ENCODE measurements at regions of chr2 and their contacts with region 1.

Region 1: DNA sequence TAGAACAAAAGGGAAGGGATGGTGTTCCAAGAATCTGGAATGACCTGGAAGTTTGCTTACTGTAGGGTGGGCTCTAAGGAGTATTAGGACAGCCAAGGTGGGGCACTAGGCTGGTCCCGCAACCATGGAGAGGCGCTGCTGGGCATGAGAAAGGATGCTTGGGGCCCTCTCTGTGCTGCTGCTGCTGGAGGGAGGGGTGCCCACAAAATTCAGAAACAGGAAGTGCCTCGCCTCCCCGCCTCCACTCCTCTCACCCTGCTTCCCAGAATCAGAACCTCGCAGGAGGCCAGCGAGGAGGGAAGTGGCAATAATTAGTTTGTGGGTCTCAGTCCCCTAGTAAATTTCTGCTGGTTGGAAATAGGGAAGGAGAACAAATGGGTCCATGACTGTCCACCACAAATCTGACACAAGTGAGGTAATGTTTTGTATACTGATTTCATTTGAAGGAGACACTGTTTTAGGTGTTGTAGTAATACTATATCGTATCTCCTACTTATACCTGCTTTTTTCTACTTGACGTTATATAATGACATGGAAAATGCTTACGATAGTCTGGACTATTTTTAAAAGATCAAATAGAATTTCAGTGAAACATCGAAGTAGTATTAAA is 7.9 kb upstream of the PDCL3 start:
- DNase-seq: peak; percentile 34
- H3K4me3 Mint-ChIP-seq: peak overlapping the region; percentile 68
- H3K27ac Mint-ChIP-seq: peak overlapping the region; percentile 82
- H3K4me1 Mint-ChIP-seq: peaks cover 20% of the 10 kb centered on the region
- H3K27me3 Mint-ChIP-seq: peaks cover 2% of the 10 kb centered on the region

Region 2: GRCh38 chr2:100529900-100530299 is 25.0 kb before region 1 on chr2:
- intact Hi-C with region 1: no loop called
- DNase-seq: no peak
- H3K4me3 Mint-ChIP-seq: no peak overlapping the region
- H3K27ac Mint-ChIP-seq: no peak overlapping the region
- H3K4me1 Mint-ChIP-seq: peaks cover 6% of the 10 kb centered on the region
- H3K27me3 Mint-ChIP-seq: no peaks in the 10 kb centered on the region

Region 3: GRCh38 chr2:100588071-100588786 is 33.3 kb after region 1 on chr2:
- intact Hi-C with region 1: loop called (anchors 5 kb)
- DNase-seq: peak; percentile 44
- H3K4me3 Mint-ChIP-seq: peak overlapping the region; percentile 2
- H3K27ac Mint-ChIP-seq: peak overlapping the region; percentile 59
- H3K4me1 Mint-ChIP-seq: peaks cover 57% of the 10 kb centered on the region
- H3K27me3 Mint-ChIP-seq: peaks cover 6% of the 10 kb centered on the region

Region 4: GRCh38 chr2:100619951-100620350 is 65.0 kb after region 1 on chr2:
- intact Hi-C with region 1: no loop called
- DNase-seq: no peak
- H3K4me3 Mint-ChIP-seq: no peak overlapping the region
- H3K27ac Mint-ChIP-seq: no peak overlapping the region
- H3K4me1 Mint-ChIP-seq: no peaks in the 10 kb centered on the region
- H3K27me3 Mint-ChIP-seq: peaks cover 2% of the 10 kb centered on the region

Measured in activated T-helper 1 cell treated with anti-CD3 and anti-CD28 coated beads, Interleukin-12 subunit alpha, Interleukin-12 subunit beta, Interleukin-2, Interleukin-4 antibody, amounts not matched to agents 30 ng/mL and 10 ng/mL and 1 ng/mL, durations not matched to agents 14 hours and 24 hours and 36 hours (primary cell).